BJ (cell line): ENCODE measurements at regions of chr1 and their contacts with region 1.

Region 1: GRCh38 chr1:26811057-26811456 is 15.4 kb upstream of the ZDHHC18 start:
- DNase-seq: no peak
- H3K4me3 ChIP-seq: no peak overlapping the region
- H3K27me3 ChIP-seq: no peaks in the 10 kb centered on the region
- CTCF ChIP-seq: no peak

Region 2: DNA sequence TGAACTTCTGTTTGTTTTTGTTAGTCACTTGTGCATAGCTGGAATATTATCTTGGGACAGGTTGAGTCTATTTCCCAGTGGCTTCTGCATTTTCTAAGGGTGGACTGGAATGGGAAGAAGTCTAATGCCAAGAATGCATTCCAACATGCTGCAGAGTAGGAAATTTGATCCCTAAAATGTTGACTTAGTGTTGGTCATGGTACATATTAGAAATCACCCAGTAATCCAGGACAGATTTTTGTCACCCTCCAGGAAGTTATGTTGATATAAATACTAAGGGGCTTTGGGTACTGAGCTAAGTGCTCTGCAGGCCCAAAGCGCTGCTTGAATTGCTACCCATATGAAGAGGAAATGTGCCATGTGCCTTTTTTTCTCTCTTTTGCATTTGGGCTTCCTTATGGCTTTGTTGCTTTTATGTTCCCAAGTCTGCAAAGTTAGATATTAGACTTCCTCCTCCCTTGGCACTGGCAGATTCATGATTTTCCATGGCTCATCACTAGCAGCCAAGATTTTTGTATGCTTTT is 105.2 kb before region 1 on chr1:
- CTCF ChIA-PET with region 1: no interaction called
- POLR2A ChIA-PET with region 1: no interaction called
- DNase-seq: peak; percentile 90
- H3K4me3 ChIP-seq: no peak overlapping the region
- H3K27me3 ChIP-seq: no peaks in the 10 kb centered on the region
- CTCF ChIP-seq: no peak

Region 3: DNA sequence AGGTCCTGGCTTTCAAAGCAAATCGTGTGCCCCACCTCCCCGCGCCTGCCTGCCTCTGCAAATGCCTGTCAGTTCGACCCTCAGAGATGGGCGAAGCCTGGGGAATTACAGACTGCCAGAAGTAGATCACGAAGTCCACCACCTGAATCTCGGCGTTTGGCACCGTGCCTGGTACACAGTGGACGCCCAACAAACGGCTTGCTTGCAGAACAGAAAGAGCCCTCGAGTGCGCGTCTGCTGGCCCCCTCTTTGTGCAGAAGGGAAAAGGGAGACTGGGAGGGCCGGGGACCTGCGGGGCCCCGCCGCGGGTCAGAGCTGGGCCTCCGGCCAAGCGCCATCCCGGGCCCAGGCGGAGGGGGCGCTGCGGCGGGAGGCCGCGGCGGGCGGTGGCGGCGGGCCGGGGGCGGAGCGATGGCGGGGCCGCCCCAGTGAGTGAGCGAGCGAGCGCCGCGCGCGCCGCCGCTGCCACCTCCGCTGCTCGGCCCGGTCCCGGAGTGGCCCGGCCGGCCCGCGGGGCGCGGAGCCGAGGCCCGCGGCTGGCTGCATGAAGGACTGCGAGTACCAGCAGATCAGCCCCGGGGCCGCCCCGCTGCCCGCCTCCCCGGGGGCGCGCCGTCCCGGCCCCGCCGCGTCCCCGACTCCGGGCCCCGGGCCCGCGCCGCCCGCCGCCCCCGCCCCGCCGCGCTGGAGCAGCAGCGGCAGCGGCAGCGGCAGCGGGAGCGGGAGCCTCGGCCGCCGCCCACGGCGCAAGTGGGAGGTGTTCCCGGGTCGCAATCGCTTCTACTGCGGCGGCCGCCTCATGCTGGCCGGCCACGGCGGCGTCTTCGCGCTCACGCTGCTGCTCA is 15.4 kb after region 1 on chr1 and contains the start of gene ZDHHC18:
- CTCF ChIA-PET with region 1: interaction called, 54 read pairs
- POLR2A ChIA-PET with region 1: no interaction called
- DNase-seq: no peak
- H3K4me3 ChIP-seq: peak within 1 kb of the TSS; percentile 83
- H3K27me3 ChIP-seq: no peaks in the 10 kb centered on the region
- CTCF ChIP-seq: peak; percentile 38; the same call in 1 of the 2 replicates
- polyA plus RNA-seq, gene ZDHHC18: 26.6 and 42.1 TPM in 2 replicates

Region 4: DNA sequence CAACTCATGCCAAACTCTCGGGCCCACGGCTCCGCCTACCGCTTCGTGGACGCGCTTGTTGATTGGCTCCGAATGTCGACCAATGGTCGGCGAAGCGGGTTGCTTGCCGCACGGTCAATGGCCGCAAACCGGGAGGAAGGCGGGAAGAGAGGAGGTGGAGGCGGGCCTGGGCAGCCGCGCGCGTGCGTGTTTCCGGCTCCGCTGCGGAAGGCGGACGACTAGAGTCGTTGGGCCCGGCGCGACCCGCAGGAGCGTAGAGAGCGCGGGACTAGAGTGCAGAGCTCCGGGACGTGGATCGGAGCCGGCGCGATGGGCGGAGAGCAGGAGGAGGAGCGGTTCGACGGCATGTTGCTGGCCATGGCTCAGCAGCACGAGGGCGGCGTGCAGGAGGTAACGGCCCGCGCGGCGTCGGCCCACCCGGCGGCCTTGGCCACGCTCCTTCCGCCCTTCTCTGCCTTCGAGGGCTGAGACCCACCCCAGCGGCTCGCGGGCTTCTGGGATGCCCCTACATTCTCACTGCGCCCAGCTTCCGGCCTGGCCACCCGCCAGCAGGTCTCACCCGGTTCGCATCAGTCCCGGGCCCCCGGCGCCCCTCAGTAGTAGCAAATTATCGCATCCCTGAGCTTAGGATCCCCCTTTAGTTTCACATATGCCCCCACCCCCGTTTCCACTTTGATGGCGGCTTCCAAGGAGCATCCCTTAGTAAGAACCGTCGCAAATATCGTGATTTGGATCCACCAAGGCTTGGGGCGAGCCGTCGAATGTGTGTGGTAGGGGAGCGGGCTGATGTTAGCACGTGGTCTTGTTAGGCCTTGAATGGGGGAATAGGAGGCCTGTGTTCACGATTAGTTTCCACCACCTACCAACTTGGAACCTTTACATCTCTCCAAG is 110.7 kb after region 1 on chr1 and contains the start of gene NUDC:
- CTCF ChIA-PET with region 1: no interaction called
- POLR2A ChIA-PET with region 1: no interaction called
- DNase-seq: peak; percentile 89
- H3K4me3 ChIP-seq: peak within 1 kb of the TSS; percentile 100
- H3K27me3 ChIP-seq: no peaks in the 10 kb centered on the region
- CTCF ChIP-seq: no peak
- polyA plus RNA-seq, gene NUDC: 40.7 and 43.7 TPM in 2 replicates